ENCODE measurements at regions of chr4 and their contacts with region 1.

Region 1: DNA sequence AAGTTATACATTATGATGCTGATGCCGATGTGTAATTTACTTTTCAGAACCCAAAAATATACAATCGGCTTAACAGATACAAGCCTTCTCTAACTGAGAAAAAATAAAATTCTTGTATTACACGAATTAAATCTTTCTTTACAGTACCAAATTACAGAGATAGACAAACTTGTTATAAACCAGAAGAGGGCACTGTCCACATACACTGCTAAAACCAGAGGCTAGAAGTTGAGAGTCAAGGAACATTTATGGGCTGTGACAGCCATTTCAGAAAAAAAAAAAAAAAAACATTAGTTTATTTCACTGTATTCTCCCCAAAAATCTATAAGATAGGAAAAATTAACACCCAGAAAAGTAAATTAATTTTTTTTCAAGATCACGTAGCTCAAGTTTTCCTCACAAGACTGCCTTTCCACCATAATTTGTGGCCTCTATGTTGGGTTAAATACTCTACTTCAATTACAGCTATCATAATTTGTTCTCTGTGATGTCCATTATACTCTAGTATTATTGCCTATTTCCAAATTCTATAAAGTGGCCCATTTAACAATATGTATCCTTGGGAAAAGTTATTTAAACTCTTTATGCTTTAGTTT is 12.0 kb downstream of the EREG start:
- DNase-seq: no peak
- ATAC-seq: peak; percentile 58
- H3K4me3 Mint-ChIP-seq: no peak overlapping the region
- H3K27ac Mint-ChIP-seq: no peak overlapping the region
- H3K4me1 Mint-ChIP-seq: peaks cover 4% of the 10 kb centered on the region
- H3K27me3 Mint-ChIP-seq: peaks cover 4% of the 10 kb centered on the region

Region 2: DNA sequence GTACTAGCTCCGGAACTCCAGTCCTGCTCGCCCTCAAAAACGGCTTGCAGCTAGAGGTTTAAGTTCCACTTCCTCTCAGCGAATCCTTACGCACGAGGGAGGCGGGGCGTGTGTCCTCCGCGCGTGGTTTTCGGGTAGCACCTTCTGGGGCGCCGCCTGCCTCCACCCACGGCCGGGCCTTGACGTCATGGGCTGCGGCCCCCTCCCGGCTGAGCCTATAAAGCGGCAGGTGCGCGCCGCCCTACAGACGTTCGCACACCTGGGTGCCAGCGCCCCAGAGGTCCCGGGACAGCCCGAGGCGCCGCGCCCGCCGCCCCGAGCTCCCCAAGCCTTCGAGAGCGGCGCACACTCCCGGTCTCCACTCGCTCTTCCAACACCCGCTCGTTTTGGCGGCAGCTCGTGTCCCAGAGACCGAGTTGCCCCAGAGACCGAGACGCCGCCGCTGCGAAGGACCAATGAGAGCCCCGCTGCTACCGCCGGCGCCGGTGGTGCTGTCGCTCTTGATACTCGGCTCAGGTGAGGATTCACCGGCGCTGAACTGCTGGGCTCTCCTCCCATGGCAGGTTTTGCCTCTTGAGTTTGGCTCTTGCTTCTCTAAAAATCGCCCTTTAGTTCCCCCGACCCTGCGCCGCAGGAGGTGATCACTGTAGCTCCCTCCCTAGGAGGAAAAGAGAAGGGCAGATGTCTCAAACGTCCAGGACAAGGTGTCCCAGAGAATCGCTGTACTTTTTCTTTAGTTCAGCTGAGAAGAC is 68.1 kb after region 1 on chr4 and contains the start of gene AREG:
- CTCF ChIA-PET with region 1: interaction called, 4 read pairs
- POLR2A ChIA-PET with region 1: no interaction called
- intact Hi-C with region 1: loop called in 1 of 2 experiments (anchors 5 kb)
- DNase-seq: peak; percentile 92
- ATAC-seq: peak; percentile 88
- H3K4me3 Mint-ChIP-seq: peak within 1 kb of the TSS; percentile 92
- H3K27ac Mint-ChIP-seq: peak within 1 kb of the TSS; percentile 83
- H3K4me1 Mint-ChIP-seq: peaks cover 13% of the 10 kb centered on the region
- H3K27me3 Mint-ChIP-seq: no peaks in the 10 kb centered on the region
- total RNA-seq, gene AREG: 0.57 to 0.91 TPM

Region 3: GRCh38 chr4:74667944-74668343 is 291.0 kb after region 1 on chr4:
- CTCF ChIA-PET with region 1: interaction called, 49 read pairs
- POLR2A ChIA-PET with region 1: no interaction called
- intact Hi-C with region 1: loop called (anchors 1 kb)
- DNase-seq: no peak
- ATAC-seq: no peak
- H3K4me3 Mint-ChIP-seq: no peak overlapping the region
- H3K27ac Mint-ChIP-seq: no peak overlapping the region
- H3K4me1 Mint-ChIP-seq: peaks cover 2% of the 10 kb centered on the region
- H3K27me3 Mint-ChIP-seq: peaks cover 10% of the 10 kb centered on the region